Ascending aorta (tissue), 2 donors: ENCODE measurements at regions of chr21 and their contacts with region 1.

Region 1: GRCh38 chr21:33360881-33361602 is 36.3 kb downstream of the IFNAR1 start:
- DNase-seq: peak; percentile 16 to 84
- H3K4me3 ChIP-seq: peak overlapping the region; percentile 2 to 18
- H3K27ac ChIP-seq: peak overlapping the region; percentile 52 to 56
- H3K4me1 ChIP-seq: peaks cover 10 to 16% of the 10 kb centered on the region in 2 donors
- H3K27me3 ChIP-seq: no peaks in the 10 kb centered on the region
- CTCF ChIP-seq: peak; percentile 57 to 74 (median 69)

Region 2: DNA sequence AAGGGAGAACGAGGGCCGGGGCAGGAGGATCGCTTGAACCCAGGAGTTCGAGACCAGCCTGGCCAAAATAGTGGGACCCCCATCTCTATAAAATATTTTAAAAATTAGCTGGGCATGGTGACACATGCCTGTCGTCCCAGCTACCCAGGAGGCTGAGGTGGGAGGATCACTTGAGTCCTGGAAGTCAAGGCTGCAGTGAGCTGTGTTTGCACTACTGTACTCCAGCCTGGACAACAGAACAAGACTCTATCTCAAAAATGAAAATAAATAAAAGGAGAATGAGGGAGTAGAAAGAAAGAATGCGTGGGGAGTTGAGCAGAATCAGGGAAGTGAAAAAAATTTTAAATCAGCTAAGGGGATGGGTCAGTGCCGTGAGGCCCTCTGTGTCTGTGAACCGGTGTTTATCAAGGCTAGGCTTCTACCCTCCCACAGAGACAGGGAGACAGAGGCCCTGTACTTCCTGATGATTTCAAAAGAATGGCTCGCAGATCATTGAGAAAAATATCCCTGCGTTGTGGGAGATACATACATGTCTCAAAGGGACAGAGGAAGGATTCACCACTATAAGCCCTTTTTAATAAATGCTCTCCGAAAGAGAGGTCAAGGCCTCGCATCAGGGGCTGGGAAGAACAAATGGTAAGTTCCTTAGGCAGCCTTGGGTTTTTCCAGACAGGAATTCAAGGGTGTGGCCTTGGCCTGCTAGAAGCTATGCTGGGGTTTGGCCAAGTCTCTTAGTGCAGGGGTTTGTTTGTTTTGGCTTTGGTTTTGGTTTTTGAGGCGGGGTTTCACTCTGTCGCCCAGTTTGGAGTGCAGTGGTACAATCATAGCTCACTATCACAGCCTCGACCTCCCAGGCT is 74.2 kb before region 1 on chr21:
- intact Hi-C with region 1: no loop called
- DNase-seq: no peak
- H3K4me3 ChIP-seq: no peak overlapping the region
- H3K27ac ChIP-seq: peak overlapping the region; percentile 40 to 76
- H3K4me1 ChIP-seq: peaks cover 0 to 14% of the 10 kb centered on the region in 2 donors
- H3K27me3 ChIP-seq: no peaks in the 10 kb centered on the region
- CTCF ChIP-seq: no peak

Region 3: GRCh38 chr21:33374450-33375096 is 13.5 kb after region 1 on chr21:
- intact Hi-C with region 1: loop called (anchors 2 kb)
- DNase-seq: no peak
- H3K4me3 ChIP-seq: no peak overlapping the region
- H3K27ac ChIP-seq: no peak overlapping the region
- H3K4me1 ChIP-seq: peaks cover 0 to 7% of the 10 kb centered on the region in 2 donors
- H3K27me3 ChIP-seq: no peaks in the 10 kb centered on the region
- CTCF ChIP-seq: peak; percentile 19 to 51 (median 49)

Region 4: DNA sequence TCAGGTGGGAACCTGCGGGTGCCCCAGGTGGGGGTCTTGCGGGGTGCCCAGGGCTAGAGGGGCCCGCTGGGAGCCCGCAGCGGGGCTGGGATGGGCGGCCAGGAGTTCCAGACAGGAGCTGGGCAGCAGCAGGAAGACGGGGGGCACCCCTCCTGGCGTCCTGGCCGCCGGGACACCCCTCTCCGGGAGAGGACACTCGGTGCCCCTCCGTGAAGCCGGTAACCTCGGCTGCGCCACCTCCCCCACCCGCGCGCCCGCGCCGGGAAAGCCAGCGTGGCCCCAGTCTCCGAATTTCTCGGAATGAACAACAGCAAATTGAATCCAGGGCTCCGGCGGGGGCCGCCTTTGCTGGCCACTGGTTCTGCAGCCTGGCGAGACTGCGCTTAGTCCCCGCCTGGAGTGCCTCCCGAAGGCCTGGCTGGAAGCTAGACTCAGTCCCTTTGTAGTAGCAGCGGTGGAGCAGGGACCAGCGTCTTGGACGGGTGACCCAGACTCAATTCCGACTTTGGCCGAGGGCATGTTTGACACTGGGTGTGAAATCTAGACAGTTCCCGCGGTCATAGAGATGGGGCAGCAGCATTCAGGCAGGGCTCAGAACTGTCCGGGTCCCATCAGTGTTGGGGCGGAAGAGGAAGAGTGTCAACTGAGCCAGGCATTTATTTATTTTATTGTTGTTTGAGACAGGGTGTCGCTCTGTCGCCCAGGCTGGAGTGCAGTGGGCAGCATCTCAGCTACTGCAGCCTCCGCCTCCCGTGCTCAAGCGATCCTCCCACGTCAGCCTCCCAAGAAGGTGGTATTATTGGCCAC is 42.9 kb after region 1 on chr21:
- intact Hi-C with region 1: loop called (anchors 2 kb)
- DNase-seq: peak in 1 of 2 donors; percentile 84
- H3K4me3 ChIP-seq: peak overlapping the region; percentile 89 to 97
- H3K27ac ChIP-seq: peak overlapping the region; percentile 97 to 99
- H3K4me1 ChIP-seq: peaks cover 0 to 19% of the 10 kb centered on the region in 2 donors
- H3K27me3 ChIP-seq: no peaks in the 10 kb centered on the region
- CTCF ChIP-seq: no peak

Region 5: DNA sequence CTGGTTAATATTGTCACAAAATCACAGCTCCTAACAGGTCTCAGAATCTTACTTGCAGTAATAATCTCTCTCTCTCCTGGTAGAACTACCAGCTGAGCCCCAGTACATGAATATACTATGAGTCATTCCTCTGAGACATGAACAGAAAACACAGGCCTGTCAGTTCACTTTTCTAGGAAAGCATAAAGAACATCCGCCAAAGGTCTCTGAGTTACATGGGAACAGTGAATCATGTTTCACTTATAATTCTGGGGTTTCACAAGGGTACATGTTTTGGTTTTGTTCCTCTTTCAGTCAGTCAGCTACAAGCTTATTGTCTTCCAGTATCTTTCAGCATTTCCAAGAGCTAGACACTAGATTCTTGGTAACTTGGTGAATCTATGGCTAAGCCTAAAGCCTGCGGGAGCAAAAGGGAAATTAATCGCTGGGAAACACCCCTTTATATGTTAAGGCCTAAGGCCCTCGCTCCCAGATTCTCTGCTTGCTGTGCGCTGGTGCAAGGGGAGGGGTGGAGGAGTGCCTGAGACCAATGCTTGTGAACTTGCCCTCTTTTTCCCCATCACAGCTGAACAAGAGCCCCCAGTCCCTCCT is 73.8 kb after region 1 on chr21:
- intact Hi-C with region 1: loop called (anchors 2 kb)
- DNase-seq: no peak
- H3K4me3 ChIP-seq: peak overlapping the region in 1 of 2 donors; percentile 23
- H3K27ac ChIP-seq: peak overlapping the region; percentile 67 to 91
- H3K4me1 ChIP-seq: peaks cover 11 to 18% of the 10 kb centered on the region in 2 donors
- H3K27me3 ChIP-seq: no peaks in the 10 kb centered on the region
- CTCF ChIP-seq: no peak

Region 6: GRCh38 chr21:33441489-33442477 is 80.7 kb after region 1 on chr21:
- intact Hi-C with region 1: loop called (anchors 2 kb)
- DNase-seq: peak in 1 of 2 donors; percentile 70
- H3K4me3 ChIP-seq: no peak overlapping the region
- H3K27ac ChIP-seq: peak overlapping the region; percentile 14 to 37
- H3K4me1 ChIP-seq: peaks cover 0 to 7% of the 10 kb centered on the region in 2 donors
- H3K27me3 ChIP-seq: no peaks in the 10 kb centered on the region
- CTCF ChIP-seq: no peak